SK-N-SH (cell line): ENCODE measurements at regions of chr22 and their contacts with region 1.

Region 1: GRCh38 chr22:33920927-33921524 is 750 bp upstream of the LARGE1 start:
- DNase-seq: peak; percentile 96
- H3K4me3 ChIP-seq: peak overlapping the region; percentile 54 to 82
- H3K27ac ChIP-seq: peak overlapping the region in 1 of 2 experiments; percentile 28; a peak in 1 of 4 replicates
- H3K4me1 ChIP-seq: peaks cover 0 to 21% of the 10 kb centered on the region in 2 experiments; a peak in 2 of 4 replicates
- H3K27me3 ChIP-seq: no peaks in the 10 kb centered on the region; the same call in 1 of the 2 replicates
- CTCF ChIP-seq: no peak
- EP300 ChIP-seq: no peak
- RAD21 ChIP-seq: no peak

Region 2: GRCh38 chr22:33909075-33909458 is 12.0 kb before region 1 on chr22:
- CTCF ChIA-PET with region 1: interaction called, 13 read pairs
- POLR2A ChIA-PET with region 1: no interaction called
- DNase-seq: no peak
- H3K4me3 ChIP-seq: no peak overlapping the region
- H3K27ac ChIP-seq: no peak overlapping the region
- H3K4me1 ChIP-seq: no peaks in the 10 kb centered on the region
- H3K27me3 ChIP-seq: no peaks in the 10 kb centered on the region
- CTCF ChIP-seq: no peak
- EP300 ChIP-seq: no peak
- RAD21 ChIP-seq: no peak

Region 3: DNA sequence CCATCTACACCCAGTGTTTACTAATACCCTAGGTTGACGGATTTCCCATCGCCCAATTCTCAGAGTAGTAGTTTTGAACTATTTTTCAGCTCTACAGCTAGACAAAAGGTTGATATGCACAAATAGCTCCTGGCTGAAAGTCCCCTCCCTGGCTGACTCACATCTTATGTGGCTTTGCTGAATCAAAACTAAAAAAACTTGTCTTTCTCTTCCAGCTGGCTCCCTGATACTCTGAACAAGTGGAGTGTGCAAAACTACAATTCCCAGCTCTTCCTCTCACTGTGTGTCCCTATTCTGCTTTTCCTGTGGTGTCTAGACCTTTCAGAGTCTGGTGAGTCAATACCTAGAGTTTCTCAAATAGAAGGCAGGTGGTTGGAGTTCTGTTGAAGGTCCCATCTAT is 12.0 kb after region 1 on chr22:
- CTCF ChIA-PET with region 1: interaction called, 39 read pairs
- POLR2A ChIA-PET with region 1: no interaction called
- DNase-seq: no peak
- H3K4me3 ChIP-seq: no peak overlapping the region
- H3K27ac ChIP-seq: no peak overlapping the region
- H3K4me1 ChIP-seq: no peaks in the 10 kb centered on the region
- H3K27me3 ChIP-seq: no peaks in the 10 kb centered on the region
- CTCF ChIP-seq: no peak
- EP300 ChIP-seq: no peak
- RAD21 ChIP-seq: no peak

Region 4: GRCh38 chr22:33940741-33941140 is 19.7 kb after region 1 on chr22:
- CTCF ChIA-PET with region 1: interaction called, 39 read pairs
- POLR2A ChIA-PET with region 1: no interaction called
- DNase-seq: no peak
- H3K4me3 ChIP-seq: no peak overlapping the region
- H3K27ac ChIP-seq: no peak overlapping the region
- H3K4me1 ChIP-seq: no peaks in the 10 kb centered on the region
- H3K27me3 ChIP-seq: no peaks in the 10 kb centered on the region
- CTCF ChIP-seq: no peak
- EP300 ChIP-seq: no peak
- RAD21 ChIP-seq: no peak

Region 5: DNA sequence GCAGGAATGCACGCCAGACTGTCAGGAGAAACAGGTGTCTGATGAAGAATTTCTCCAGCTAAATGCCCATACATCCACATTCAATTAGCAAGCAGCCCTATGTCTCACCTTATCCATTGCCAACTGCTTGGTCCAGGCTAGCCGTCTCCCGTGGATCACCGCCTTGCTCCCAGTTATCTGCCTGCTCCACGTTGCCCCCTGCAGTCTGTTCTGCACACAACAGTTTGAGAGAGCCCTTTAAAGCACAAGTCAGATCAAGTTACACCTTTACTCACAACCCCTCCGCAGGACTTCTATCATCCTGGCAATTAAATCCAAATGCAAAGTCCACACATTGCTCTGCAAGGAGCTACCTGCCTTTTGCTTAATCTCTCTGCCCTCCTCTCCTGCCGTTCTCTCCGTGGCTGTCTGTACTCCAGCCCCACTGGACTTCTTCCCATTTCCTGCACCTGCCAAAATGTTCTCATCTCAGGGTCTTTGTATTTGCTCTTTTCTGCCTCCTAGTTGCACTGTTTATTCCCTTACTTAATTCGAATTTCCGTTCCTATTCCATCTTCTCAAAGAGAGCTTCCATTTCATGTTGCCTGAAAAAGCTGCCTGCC is 184.5 kb after region 1 on chr22:
- CTCF ChIA-PET with region 1: interaction called, 42 read pairs
- POLR2A ChIA-PET with region 1: no interaction called
- DNase-seq: peak; percentile 40
- H3K4me3 ChIP-seq: no peak overlapping the region; a peak in 1 of 4 replicates
- H3K27ac ChIP-seq: no peak overlapping the region
- H3K4me1 ChIP-seq: no peaks in the 10 kb centered on the region
- H3K27me3 ChIP-seq: no peaks in the 10 kb centered on the region
- CTCF ChIP-seq: no peak
- EP300 ChIP-seq: no peak
- RAD21 ChIP-seq: peak; percentile 63

Region 6: GRCh38 chr22:34111210-34111824 is 190.3 kb after region 1 on chr22:
- CTCF ChIA-PET with region 1: interaction called, 42 read pairs
- POLR2A ChIA-PET with region 1: no interaction called
- DNase-seq: peak; percentile 48
- H3K4me3 ChIP-seq: no peak overlapping the region; a peak in 1 of 4 replicates
- H3K27ac ChIP-seq: no peak overlapping the region
- H3K4me1 ChIP-seq: no peaks in the 10 kb centered on the region
- H3K27me3 ChIP-seq: no peaks in the 10 kb centered on the region
- CTCF ChIP-seq: peak; percentile 53
- EP300 ChIP-seq: no peak
- RAD21 ChIP-seq: peak; percentile 53